A673 (cell line): ENCODE measurements at regions of chr12 and their contacts with region 1.

Region 1: DNA sequence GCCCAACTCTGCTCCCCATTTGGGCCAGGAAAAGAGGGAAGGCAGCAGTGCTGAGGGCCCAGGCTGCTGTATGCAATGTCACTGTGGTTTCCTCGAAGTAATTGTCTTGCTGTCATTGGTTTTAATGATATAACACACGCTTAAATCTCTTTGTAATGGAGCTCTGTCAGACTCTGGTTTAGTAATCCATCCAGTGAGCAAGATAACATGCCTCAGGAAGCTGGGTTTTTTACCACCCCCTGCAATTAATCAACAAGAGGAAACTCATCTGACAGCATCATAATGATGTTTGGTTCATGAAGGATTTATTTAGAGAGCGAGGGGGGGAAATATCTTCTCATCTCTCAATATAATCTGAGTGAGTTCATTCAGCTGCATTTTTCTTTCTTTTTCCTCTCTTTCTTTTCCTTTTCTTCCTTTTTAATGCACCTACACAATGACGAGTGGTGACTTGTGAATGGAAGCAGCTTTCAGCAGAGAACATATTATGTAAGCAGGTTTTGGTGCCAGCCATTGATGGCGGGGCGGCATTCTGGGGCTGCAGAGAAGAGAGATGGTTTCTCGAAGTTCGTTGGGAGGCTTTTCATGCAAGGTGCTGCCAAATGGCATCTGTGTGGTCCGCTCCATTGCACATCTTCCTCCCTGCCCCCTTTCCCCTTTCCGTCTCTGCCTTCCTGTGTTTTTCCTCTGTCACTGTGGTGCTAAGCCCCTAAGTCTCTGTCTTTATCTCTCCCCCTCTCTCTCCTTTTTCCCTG is 6.6 kb downstream of the RPH3A start:
- DNase-seq: peak; percentile 98
- H3K4me3 ChIP-seq: peak overlapping the region; percentile 29
- H3K27ac ChIP-seq: peak overlapping the region; percentile 99
- H3K4me1 ChIP-seq: peaks cover 77% of the 10 kb centered on the region
- H3K27me3 ChIP-seq: no peaks in the 10 kb centered on the region
- CTCF ChIP-seq: no peak

Region 2: GRCh38 chr12:112537710-112538396 is 260.3 kb before region 1 on chr12:
- CTCF ChIA-PET with region 1: no interaction called
- POLR2A ChIA-PET with region 1: no interaction called
- intact Hi-C with region 1: loop called (anchors 5 kb)
- DNase-seq: peak; percentile 84
- H3K4me3 ChIP-seq: no peak overlapping the region
- H3K27ac ChIP-seq: peak overlapping the region; percentile 81
- H3K4me1 ChIP-seq: peaks cover 6% of the 10 kb centered on the region
- H3K27me3 ChIP-seq: no peaks in the 10 kb centered on the region
- CTCF ChIP-seq: no peak

Region 3: GRCh38 chr12:112676526-112676925 is 121.7 kb before region 1 on chr12:
- CTCF ChIA-PET with region 1: no interaction called
- POLR2A ChIA-PET with region 1: interaction called, 4 read pairs
- intact Hi-C with region 1: loop called (anchors 1 kb)
- DNase-seq: peak; percentile 52
- H3K4me3 ChIP-seq: no peak overlapping the region
- H3K27ac ChIP-seq: peak overlapping the region; percentile 81
- H3K4me1 ChIP-seq: peaks cover 33% of the 10 kb centered on the region
- H3K27me3 ChIP-seq: no peaks in the 10 kb centered on the region
- CTCF ChIP-seq: no peak

Region 4: GRCh38 chr12:112833272-112833671 is 35.1 kb after region 1 on chr12:
- CTCF ChIA-PET with region 1: no interaction called
- POLR2A ChIA-PET with region 1: no interaction called
- intact Hi-C with region 1: no loop called
- DNase-seq: no peak
- H3K4me3 ChIP-seq: no peak overlapping the region
- H3K27ac ChIP-seq: no peak overlapping the region
- H3K4me1 ChIP-seq: peaks cover 10% of the 10 kb centered on the region
- H3K27me3 ChIP-seq: no peaks in the 10 kb centered on the region
- CTCF ChIP-seq: no peak

Region 5: DNA sequence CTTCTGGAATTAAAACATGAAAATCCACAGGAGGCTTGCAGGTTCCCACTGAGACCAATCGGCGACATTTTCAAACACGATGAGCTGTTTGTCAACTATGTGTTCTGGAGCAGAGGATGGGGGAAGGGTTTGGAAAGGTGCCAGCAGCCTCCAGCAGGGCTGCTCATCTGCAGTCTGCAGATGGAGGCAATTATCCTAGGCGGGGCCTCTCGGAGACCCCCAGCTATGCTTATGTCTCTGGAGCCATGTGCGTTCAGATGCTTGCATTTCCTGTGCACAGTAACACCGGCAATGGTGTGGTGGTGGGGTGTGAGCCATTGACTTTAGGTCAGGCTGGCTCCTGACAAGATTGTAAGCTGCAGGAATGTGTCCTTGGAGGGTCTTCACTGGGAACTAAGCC is 45.1 kb after region 1 on chr12:
- CTCF ChIA-PET with region 1: no interaction called
- POLR2A ChIA-PET with region 1: no interaction called
- intact Hi-C with region 1: loop called (anchors 1 kb)
- DNase-seq: peak; percentile 94
- H3K4me3 ChIP-seq: no peak overlapping the region
- H3K27ac ChIP-seq: peak overlapping the region; percentile 66
- H3K4me1 ChIP-seq: peaks cover 32% of the 10 kb centered on the region
- H3K27me3 ChIP-seq: no peaks in the 10 kb centered on the region
- CTCF ChIP-seq: no peak